HEK293T (cell line): ENCODE measurements at regions of chr6 and their contacts with region 1.

Region 1: DNA sequence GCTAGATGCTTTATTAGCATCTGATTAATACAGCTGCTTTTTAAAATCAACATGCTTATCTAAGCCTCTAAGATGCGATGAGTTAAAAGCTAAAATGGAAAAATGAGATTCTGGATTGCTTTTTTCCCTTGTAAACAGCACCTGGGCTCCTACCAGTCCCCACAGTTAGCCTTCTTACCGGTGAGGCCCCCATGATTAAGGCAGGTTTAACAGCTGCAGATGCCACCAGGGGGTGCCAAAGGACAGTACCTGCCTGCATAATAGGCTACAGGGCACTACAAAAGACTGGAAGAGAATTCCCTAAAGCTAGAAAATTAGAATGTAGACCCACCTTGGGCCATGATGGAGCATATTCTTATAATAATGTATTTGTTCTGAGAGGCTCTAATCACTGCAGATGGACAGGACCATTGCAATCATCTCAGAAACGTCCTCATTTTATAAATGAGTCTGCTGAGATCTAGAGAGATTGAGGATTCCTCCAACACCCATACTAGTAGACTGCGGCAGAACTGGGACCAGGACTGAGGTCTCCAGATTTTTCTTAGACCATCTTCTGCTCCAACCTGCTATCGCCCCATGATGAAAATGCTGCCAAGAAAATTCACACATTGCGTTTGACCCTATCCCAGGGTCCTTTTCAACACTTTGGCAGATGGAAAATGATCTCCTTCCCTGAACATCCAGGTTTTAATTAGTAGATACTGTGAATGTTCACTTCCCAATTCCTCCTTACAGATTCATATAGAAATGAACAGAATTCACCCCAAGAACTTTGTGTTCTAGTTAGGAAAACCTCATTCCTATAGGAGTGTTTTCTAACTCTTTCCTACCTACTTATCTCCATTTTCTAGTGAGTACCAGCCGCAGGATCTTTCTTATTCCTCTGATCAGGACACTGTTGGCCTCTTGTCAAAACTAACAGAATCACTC is 148.8 kb downstream of the RPS12 start:
- DNase-seq: peak; percentile 78

Region 2: GRCh38 chr6:132830334-132830751 is 132.9 kb before region 1 on chr6:
- CTCF ChIA-PET with region 1: interaction called, 10 read pairs
- POLR2A ChIA-PET with region 1: no interaction called
- DNase-seq: peak; percentile 38

Region 3: GRCh38 chr6:132973514-132973993 is 10.4 kb after region 1 on chr6:
- CTCF ChIA-PET with region 1: interaction called, 10 read pairs
- POLR2A ChIA-PET with region 1: no interaction called
- DNase-seq: peak; percentile 37

Region 4: GRCh38 chr6:133026705-133027104 is 63.5 kb after region 1 on chr6:
- CTCF ChIA-PET with region 1: no interaction called
- POLR2A ChIA-PET with region 1: no interaction called
- DNase-seq: no peak